Activated CD8-positive, alpha-beta T cell treated with anti-CD3 and anti-CD28 coated beads for 36 hours (primary cell): ENCODE measurements at regions of chr20 and their contacts with region 1.

Region 1: GRCh38 chr20:48597405-48598302 is 230.1 kb downstream of the PREX1 start:
- DNase-seq: no peak
- ATAC-seq: no peak
- H3K4me3 Mint-ChIP-seq: no peak overlapping the region
- H3K27ac Mint-ChIP-seq: no peak overlapping the region
- H3K4me1 Mint-ChIP-seq: no peaks in the 10 kb centered on the region
- H3K27me3 Mint-ChIP-seq: no peaks in the 10 kb centered on the region
- CTCF ChIP-seq: no peak

Region 2: GRCh38 chr20:48212806-48213472 is 384.7 kb before region 1 on chr20:
- CTCF ChIA-PET with region 1: no interaction called
- POLR2A ChIA-PET with region 1: no interaction called
- intact Hi-C with region 1: loop called (anchors 2 kb)
- DNase-seq: no peak
- ATAC-seq: no peak
- H3K4me3 Mint-ChIP-seq: no peak overlapping the region
- H3K27ac Mint-ChIP-seq: no peak overlapping the region
- H3K4me1 Mint-ChIP-seq: no peaks in the 10 kb centered on the region
- H3K27me3 Mint-ChIP-seq: peaks cover 5% of the 10 kb centered on the region
- CTCF ChIP-seq: no peak